BJ (cell line): ENCODE measurements at regions of chr1 and their contacts with region 1.

Region 1: DNA sequence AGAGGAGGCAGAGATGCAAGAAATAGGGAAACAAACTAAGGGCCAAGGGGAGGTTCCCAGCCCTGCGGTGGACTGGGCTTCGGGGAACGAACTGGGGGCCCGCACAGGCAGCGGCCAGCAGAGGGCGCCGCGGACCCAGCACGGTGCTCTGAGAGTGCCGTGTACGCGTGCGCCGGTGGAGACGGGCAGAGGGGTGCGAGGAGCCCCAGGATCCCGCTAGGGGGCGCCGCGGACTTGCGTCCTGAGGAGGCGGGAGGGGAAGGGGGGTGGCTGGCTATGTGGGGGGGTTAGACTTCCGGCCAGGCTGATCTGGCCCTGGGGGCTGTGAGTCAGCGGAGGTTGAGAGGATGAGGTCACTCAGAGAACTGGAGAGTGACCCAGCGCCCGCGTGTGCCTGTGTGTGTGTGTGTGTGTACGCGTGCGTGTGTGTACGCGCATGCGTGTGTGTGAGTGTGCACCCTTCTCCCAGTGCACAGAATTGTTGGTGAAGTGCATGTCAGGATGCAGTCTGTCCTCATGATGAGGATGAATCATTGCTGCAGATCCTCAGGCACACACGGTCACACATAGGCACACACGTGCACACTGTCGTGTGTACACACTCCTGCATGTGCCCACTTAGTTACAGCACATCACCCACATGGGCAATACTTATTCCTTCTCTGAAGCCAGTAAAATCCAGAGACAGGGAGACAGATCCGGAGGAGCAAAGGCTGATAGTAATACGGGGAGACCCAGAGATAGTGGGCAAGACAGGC is 17.0 kb downstream of the NES start:
- DNase-seq: peak; percentile 85
- H3K4me3 ChIP-seq: no peak overlapping the region
- H3K27me3 ChIP-seq: peaks cover 18% of the 10 kb centered on the region
- CTCF ChIP-seq: peak; percentile 100

Region 2: DNA sequence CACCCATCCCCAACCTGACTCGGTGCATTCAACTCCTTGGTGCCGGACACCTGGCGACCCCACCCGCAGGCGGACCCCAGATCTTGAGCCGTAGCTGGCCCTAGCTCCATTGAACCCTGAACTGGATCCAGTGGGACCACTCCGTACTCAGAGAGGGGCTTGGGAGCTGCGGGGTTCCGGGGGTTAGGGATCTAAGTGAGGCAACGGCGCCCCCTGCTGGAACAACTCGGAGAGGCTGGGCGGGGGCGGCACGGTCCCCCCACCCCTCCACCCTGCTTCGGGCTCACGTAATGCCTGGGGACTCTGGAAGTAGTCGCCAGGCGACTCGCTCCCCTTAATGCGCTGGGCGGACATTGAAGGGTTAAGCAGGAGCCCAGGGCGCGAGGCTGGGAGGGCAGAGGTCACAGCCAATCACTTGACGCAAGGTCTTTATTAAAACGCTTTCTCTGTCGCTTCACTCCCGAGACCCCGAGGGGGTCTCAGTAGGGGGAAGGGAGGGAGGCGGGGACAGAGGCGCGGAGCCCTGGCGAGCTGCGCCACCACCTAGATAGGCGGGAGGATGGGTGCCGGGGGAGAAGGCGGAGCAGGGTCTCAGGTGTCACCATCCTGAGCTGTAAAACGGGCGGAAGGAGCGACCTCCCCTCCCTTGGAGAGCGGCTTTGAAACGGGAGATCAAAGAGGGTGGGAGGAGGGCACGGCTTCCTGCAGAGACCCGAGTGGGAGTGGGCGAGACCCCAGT is 45.9 kb after region 1 on chr1:
- CTCF ChIA-PET with region 1: interaction called, 34 read pairs
- POLR2A ChIA-PET with region 1: interaction called, 3 read pairs
- DNase-seq: no peak
- H3K4me3 ChIP-seq: peak overlapping the region; percentile 58
- H3K27me3 ChIP-seq: no peaks in the 10 kb centered on the region
- CTCF ChIP-seq: peak; percentile 86

Region 3: GRCh38 chr1:157380523-157380922 is 720.4 kb after region 1 on chr1:
- CTCF ChIA-PET with region 1: no interaction called
- POLR2A ChIA-PET with region 1: no interaction called
- DNase-seq: no peak
- H3K4me3 ChIP-seq: no peak overlapping the region
- H3K27me3 ChIP-seq: no peaks in the 10 kb centered on the region
- CTCF ChIP-seq: no peak